Activated CD8-positive, alpha-beta memory T cell treated with anti-CD3 and anti-CD28 coated beads, Interleukin-2, amount 10 ng/mL, durations not matched to agents 7 days and 5 days (primary cell): ENCODE measurements at regions of chr1 and their contacts with region 1.

Region 1: DNA sequence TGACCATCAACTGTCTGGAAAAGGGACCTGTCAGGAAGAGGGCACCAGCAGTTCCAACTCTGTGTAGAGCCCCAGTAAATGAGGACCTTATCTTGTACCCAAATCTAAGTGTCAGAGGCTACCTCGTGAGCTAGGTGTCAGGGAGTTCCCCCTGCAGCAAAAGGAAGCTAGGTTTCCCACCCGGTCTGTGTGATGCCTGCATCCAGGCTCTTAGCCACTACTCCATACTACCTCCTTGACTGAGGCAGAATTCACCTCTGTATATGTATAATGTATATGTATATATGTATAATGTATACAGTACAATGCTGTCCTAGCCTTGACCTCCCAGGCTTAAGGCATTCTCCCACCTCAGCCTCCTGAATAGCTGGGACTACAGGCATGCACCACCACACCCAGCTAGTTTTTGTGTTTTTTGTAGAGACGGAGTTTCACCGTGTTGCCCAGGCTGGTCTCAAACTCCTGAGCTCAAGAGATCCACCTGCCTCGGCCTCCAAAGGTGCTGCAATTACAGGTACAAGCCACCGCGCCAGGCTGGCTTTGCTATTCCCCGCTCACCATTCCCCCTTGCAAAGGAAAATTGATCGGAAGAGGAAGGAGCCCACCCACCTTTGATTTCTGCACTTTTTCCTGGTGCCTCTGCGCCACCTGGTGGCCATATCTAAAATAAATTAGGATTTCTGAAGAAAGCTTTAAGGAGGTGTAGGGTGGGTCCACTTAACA is 15.7 kb upstream of the LUZP1 start:
- DNase-seq: no peak
- ATAC-seq: peak; percentile 36
- H3K4me3 Mint-ChIP-seq: peak overlapping the region; percentile 33
- H3K27ac Mint-ChIP-seq: no peak overlapping the region
- H3K4me1 Mint-ChIP-seq: peaks cover 7% of the 10 kb centered on the region
- H3K27me3 Mint-ChIP-seq: peaks cover 13% of the 10 kb centered on the region

Region 2: GRCh38 chr1:22850681-22851080 is 333.7 kb before region 1 on chr1:
- CTCF ChIA-PET with region 1: no interaction called
- DNase-seq: no peak
- ATAC-seq: no peak
- H3K4me3 Mint-ChIP-seq: no peak overlapping the region
- H3K27ac Mint-ChIP-seq: no peak overlapping the region
- H3K4me1 Mint-ChIP-seq: no peaks in the 10 kb centered on the region
- H3K27me3 Mint-ChIP-seq: peaks cover 34% of the 10 kb centered on the region

Region 3: GRCh38 chr1:22976461-22977243 is 207.7 kb before region 1 on chr1:
- CTCF ChIA-PET with region 1: interaction called, 11 read pairs
- DNase-seq: peak; percentile 71
- ATAC-seq: peak; percentile 83
- H3K4me3 Mint-ChIP-seq: no peak overlapping the region
- H3K27ac Mint-ChIP-seq: no peak overlapping the region
- H3K4me1 Mint-ChIP-seq: no peaks in the 10 kb centered on the region
- H3K27me3 Mint-ChIP-seq: peaks cover 30% of the 10 kb centered on the region

Region 4: DNA sequence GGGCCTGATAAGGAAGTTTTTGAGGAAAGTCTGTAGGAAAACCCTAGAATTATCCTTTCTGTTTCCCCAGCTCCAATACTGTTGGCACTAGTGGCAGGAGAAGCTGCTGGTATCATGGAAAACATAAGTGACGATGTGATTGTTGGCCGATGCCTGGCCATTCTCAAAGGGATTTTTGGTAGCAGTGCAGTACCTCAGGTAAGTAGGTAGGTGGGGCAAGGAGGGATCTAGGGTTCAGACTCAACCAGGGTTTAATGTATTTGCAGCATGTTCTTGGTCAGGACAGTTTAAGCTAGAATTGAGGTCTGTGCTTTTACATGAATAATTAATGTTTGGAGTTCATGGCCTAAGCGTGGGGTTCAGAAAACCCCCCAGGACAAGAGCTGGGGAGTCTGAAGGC is 103.0 kb before region 1 on chr1:
- CTCF ChIA-PET with region 1: interaction called, 39 read pairs
- DNase-seq: no peak
- ATAC-seq: no peak
- H3K4me3 Mint-ChIP-seq: no peak overlapping the region
- H3K27ac Mint-ChIP-seq: no peak overlapping the region
- H3K4me1 Mint-ChIP-seq: no peaks in the 10 kb centered on the region
- H3K27me3 Mint-ChIP-seq: no peaks in the 10 kb centered on the region

Region 5: DNA sequence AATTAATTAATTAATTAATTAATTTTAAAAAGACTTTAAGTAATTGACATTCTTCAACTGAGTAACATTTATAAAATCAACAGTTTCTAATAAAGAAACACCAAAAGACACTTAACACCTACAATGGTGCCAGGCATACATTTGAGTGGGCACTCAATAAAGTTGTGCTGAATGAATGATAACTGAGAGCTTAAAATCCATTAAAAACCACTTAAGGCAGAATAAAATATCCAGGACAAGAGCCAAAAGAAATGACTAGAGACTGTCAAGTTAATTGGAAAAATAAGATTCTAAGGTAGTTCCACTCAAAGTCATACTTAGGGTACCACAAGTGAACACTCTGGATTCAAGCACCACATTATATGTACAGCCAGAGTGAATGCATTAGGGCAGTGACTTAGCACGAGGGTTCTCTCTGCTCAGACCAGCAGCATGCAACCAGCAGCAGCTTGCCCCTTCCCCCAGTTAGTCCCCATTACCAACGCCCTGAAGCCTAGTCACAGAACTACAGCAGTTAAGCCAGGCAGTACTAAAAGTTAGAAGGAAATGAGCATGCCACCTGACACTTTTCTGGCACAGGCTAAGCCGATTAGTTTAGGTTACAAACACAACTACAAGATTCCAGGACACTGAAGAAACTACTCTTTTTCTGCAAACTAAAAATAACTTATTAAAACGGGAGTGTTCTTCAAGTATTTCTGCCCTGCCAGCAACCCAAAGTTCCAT is 62.2 kb before region 1 on chr1:
- CTCF ChIA-PET with region 1: interaction called, 24 read pairs
- DNase-seq: no peak
- ATAC-seq: no peak
- H3K4me3 Mint-ChIP-seq: no peak overlapping the region
- H3K27ac Mint-ChIP-seq: no peak overlapping the region
- H3K4me1 Mint-ChIP-seq: peaks cover 44% of the 10 kb centered on the region
- H3K27me3 Mint-ChIP-seq: no peaks in the 10 kb centered on the region

Region 6: GRCh38 chr1:23163395-23163794 is 21.0 kb before region 1 on chr1:
- CTCF ChIA-PET with region 1: interaction called, 107 read pairs
- DNase-seq: no peak
- ATAC-seq: no peak
- H3K4me3 Mint-ChIP-seq: no peak overlapping the region
- H3K27ac Mint-ChIP-seq: no peak overlapping the region
- H3K4me1 Mint-ChIP-seq: peaks cover 8% of the 10 kb centered on the region
- H3K27me3 Mint-ChIP-seq: peaks cover 2% of the 10 kb centered on the region

Region 7: GRCh38 chr1:23196639-23197328 is 12.4 kb after region 1 on chr1:
- CTCF ChIA-PET with region 1: interaction called, 34 read pairs
- DNase-seq: no peak
- ATAC-seq: no peak
- H3K4me3 Mint-ChIP-seq: no peak overlapping the region
- H3K27ac Mint-ChIP-seq: no peak overlapping the region
- H3K4me1 Mint-ChIP-seq: no peaks in the 10 kb centered on the region
- H3K27me3 Mint-ChIP-seq: peaks cover 18% of the 10 kb centered on the region